Activated T-helper 1 cell treated with anti-CD3 and anti-CD28 coated beads, Interleukin-12 subunit alpha, Interleukin-12 subunit beta, Interleukin-2, Interleukin-4 antibody, amounts not matched to agents 30 ng/mL and 10 ng/mL and 1 ng/mL, durations not matched to agents 14 hours and 24 hours and 36 hours (primary cell): ENCODE measurements at regions of chr15 and their contacts with region 1.

Region 1: DNA sequence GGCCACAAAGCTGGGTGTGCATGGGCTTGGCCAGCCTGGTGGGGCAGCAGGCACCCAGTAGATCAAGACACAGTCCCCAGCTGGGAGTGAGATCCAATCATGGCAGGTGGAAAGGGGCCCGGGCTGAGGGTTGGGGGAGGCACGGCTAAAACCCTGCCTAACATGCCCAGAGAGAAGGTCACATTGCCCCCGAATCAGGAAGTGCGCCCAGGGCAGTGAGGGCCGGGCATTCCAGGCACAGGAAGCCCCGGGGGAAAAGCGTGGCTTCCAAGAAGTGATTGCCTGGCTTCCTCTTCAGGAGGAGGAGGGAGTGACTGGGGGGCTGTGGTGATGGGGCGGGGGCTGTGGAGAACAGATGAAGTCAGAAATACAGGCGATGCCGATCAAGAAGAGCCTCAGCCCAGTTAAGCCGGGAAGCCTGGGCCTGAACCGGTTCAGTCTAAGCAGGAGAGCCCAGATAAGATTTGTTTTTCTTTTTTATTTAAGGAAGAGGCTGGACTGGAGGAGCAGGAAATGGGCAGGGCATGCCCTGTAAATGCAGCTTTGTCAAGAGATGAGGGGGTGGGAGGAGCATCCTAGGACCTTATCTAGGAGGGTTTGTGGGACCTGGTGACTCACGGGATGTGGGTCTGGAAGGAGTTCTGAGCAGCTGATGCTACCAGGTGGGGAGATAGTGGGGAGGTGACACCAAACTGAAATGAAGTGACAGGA is 83.9 kb downstream of the CHSY1 start:
- DNase-seq: peak; percentile 77
- H3K4me3 Mint-ChIP-seq: peak overlapping the region; percentile 58
- H3K27ac Mint-ChIP-seq: peak overlapping the region; percentile 88
- H3K4me1 Mint-ChIP-seq: peaks cover 58% of the 10 kb centered on the region
- H3K27me3 Mint-ChIP-seq: no peaks in the 10 kb centered on the region

Region 2: GRCh38 chr15:101135532-101136166 is 32.3 kb before region 1 on chr15:
- intact Hi-C with region 1: loop called (anchors 2 kb)
- DNase-seq: no peak
- H3K4me3 Mint-ChIP-seq: peak overlapping the region; percentile 9
- H3K27ac Mint-ChIP-seq: peak overlapping the region; percentile 46
- H3K4me1 Mint-ChIP-seq: peaks cover 41% of the 10 kb centered on the region
- H3K27me3 Mint-ChIP-seq: no peaks in the 10 kb centered on the region

Region 3: GRCh38 chr15:101188637-101189408 is 20.9 kb after region 1 on chr15:
- intact Hi-C with region 1: loop called (anchors 1 kb)
- DNase-seq: no peak
- H3K4me3 Mint-ChIP-seq: peak overlapping the region; percentile 41
- H3K27ac Mint-ChIP-seq: peak overlapping the region; percentile 94
- H3K4me1 Mint-ChIP-seq: peaks cover 87% of the 10 kb centered on the region
- H3K27me3 Mint-ChIP-seq: no peaks in the 10 kb centered on the region

Region 4: GRCh38 chr15:101198800-101199199 is 30.9 kb after region 1 on chr15:
- intact Hi-C with region 1: loop called (anchors 1 kb)
- DNase-seq: no peak
- H3K4me3 Mint-ChIP-seq: peak overlapping the region; percentile 68
- H3K27ac Mint-ChIP-seq: peak overlapping the region; percentile 92
- H3K4me1 Mint-ChIP-seq: peaks cover 92% of the 10 kb centered on the region
- H3K27me3 Mint-ChIP-seq: no peaks in the 10 kb centered on the region

Region 5: GRCh38 chr15:101251830-101252820 is 84.2 kb after region 1 on chr15 and contains the start of gene CHSY1:
- intact Hi-C with region 1: loop called (anchors 2 kb)
- DNase-seq: peak; percentile 88
- H3K4me3 Mint-ChIP-seq: peak within 1 kb of the TSS; percentile 91
- H3K27ac Mint-ChIP-seq: peak within 1 kb of the TSS; percentile 90
- H3K4me1 Mint-ChIP-seq: peaks cover 69% of the 10 kb centered on the region
- H3K27me3 Mint-ChIP-seq: no peaks in the 10 kb centered on the region
- total RNA-seq, gene CHSY1: 76.3 and 78.0 TPM in 2 replicates